Dendritic cell treated with granulocyte-macrophage colony-stimulating factor and Interleukin-4, amounts not matched to agents 40 ng/mL and 50 ng/mL, for 4 days (primary cell): ENCODE measurements at regions of chr19 and their contacts with region 1.

Region 1: GRCh38 chr19:18251587-18252369 is 22.5 kb downstream of the IQCN start:
- H3K4me3 Mint-ChIP-seq: no peak overlapping the region
- H3K27ac Mint-ChIP-seq: peak overlapping the region; percentile 51
- H3K4me1 Mint-ChIP-seq: peaks cover 35% of the 10 kb centered on the region
- H3K27me3 Mint-ChIP-seq: peaks cover 47% of the 10 kb centered on the region

Region 2: GRCh38 chr19:18063463-18063862 is 188.3 kb before region 1 on chr19:
- intact Hi-C with region 1: loop called (anchors 5 kb)
- H3K4me3 Mint-ChIP-seq: no peak overlapping the region
- H3K27ac Mint-ChIP-seq: no peak overlapping the region
- H3K4me1 Mint-ChIP-seq: peaks cover 4% of the 10 kb centered on the region
- H3K27me3 Mint-ChIP-seq: no peaks in the 10 kb centered on the region